Naive thymus-derived CD4-positive, alpha-beta T cell (primary cell): ENCODE measurements at regions of chr14 and their contacts with region 1.

Region 1: DNA sequence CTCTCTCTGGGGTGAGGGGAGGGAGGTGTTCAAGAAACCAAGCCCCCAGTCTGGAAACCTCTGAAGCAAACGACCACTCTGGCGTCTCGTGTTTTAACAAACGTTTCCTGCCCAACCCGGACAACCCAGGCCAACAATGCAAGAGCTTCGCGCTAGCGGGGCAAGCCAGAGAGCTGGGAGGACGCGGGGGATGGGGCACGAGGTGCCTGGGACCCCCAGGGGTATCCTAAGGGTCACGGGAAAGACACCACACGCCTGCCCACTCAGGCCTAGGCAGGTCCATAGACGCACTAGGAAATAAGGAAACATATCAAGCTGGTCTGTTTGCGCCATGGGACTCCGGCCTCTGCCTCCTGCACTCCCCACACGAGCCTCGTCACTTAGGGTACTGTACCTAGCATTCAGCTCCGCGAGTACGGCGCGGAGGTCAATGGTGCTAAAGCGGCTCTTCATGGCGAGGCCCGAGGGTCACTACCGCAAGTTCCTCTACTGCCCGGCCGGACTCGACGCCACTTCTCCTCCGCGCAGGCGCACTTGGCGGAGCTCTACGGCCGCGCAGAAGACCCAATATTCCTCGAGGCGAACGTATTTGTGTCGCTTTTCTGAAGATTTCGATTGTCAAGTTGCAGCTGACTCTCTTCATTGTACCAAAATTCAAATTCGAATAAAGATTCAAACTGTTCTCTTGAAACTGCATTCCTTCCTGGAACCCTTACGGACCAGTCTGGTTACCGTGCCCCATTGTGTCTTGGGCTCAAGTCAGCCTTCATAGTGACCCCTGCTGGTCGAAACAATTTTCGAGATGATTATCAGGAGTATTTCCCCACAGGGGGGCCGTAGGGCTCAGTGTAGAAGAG is at the start of gene NEMF:
- DNase-seq: peak; percentile 67 to 81 (median 78)
- ATAC-seq: peak; percentile 90
- H3K4me3 ChIP-seq: peak within 1 kb of the TSS; percentile 86
- H3K4me3 Mint-ChIP-seq: peak within 1 kb of the TSS; percentile 93 to 100 (median 96)
- H3K27ac ChIP-seq: peak within 1 kb of the TSS; percentile 87
- H3K27ac Mint-ChIP-seq: peak within 1 kb of the TSS; percentile 94 to 99 (median 97)
- H3K4me1 ChIP-seq: peaks cover 17 to 31% of the 10 kb centered on the region in 2 donors
- H3K4me1 Mint-ChIP-seq: peaks cover 26 to 49% (median 43%) of the 10 kb centered on the region in 7 donors
- H3K27me3 ChIP-seq: no peaks in the 10 kb centered on the region
- H3K27me3 Mint-ChIP-seq: no peaks in the 10 kb centered on the region
- total RNA-seq, gene NEMF: 88.6 to 127 (median 105) TPM

Region 2: GRCh38 chr14:49620182-49621113 is 232.1 kb before region 1 on chr14 and contains the starts of genes MGAT2 and RPL36AL:
- CTCF ChIA-PET with region 1: interaction called, 3 read pairs
- POLR2A ChIA-PET with region 1: interaction called, 17 read pairs
- intact Hi-C with region 1: no loop called
- DNase-seq: peak; percentile 89 to 95 (median 94)
- ATAC-seq: peak; percentile 92
- H3K4me3 ChIP-seq: peak within 1 kb of the TSS; percentile 98
- H3K4me3 Mint-ChIP-seq: peak within 1 kb of the TSS; percentile 94 to 99 (median 98)
- H3K27ac ChIP-seq: peak within 1 kb of the TSS; percentile 97
- H3K27ac Mint-ChIP-seq: peak within 1 kb of the TSS; percentile 95 to 100 (median 99)
- H3K4me1 ChIP-seq: peaks cover 40 to 42% of the 10 kb centered on the region in 2 donors
- H3K4me1 Mint-ChIP-seq: peaks cover 36 to 75% (median 56%) of the 10 kb centered on the region in 7 donors
- H3K27me3 ChIP-seq: no peaks in the 10 kb centered on the region
- H3K27me3 Mint-ChIP-seq: no peaks in the 10 kb centered on the region
- total RNA-seq, gene MGAT2: 16.8 to 69.3 (median 35.1) TPM
- total RNA-seq, gene RPL36AL: 177 to 429 (median 281) TPM

Region 3: GRCh38 chr14:49767562-49768300 is 84.8 kb before region 1 on chr14 and contains the start of gene KLHDC2:
- CTCF ChIA-PET with region 1: interaction called, 6 read pairs
- POLR2A ChIA-PET with region 1: interaction called, 21 read pairs
- intact Hi-C with region 1: loop called in 1 of 2 experiments (anchors 1 kb)
- DNase-seq: peak; percentile 84 to 94 (median 89)
- ATAC-seq: peak; percentile 88
- H3K4me3 ChIP-seq: peak within 1 kb of the TSS; percentile 62
- H3K4me3 Mint-ChIP-seq: peak within 1 kb of the TSS; percentile 95 to 99 (median 98)
- H3K27ac ChIP-seq: peak within 1 kb of the TSS; percentile 96
- H3K27ac Mint-ChIP-seq: peak within 1 kb of the TSS; percentile 98 to 100 (median 99)
- H3K4me1 ChIP-seq: peaks cover 26 to 27% of the 10 kb centered on the region in 2 donors
- H3K4me1 Mint-ChIP-seq: peaks cover 20 to 46% (median 40%) of the 10 kb centered on the region in 7 donors
- H3K27me3 ChIP-seq: no peaks in the 10 kb centered on the region
- H3K27me3 Mint-ChIP-seq: peaks cover 0 to 2% (median 0%) of the 10 kb centered on the region in 5 donors
- total RNA-seq, gene KLHDC2: 33.2 to 105 (median 84.7) TPM

Region 4: DNA sequence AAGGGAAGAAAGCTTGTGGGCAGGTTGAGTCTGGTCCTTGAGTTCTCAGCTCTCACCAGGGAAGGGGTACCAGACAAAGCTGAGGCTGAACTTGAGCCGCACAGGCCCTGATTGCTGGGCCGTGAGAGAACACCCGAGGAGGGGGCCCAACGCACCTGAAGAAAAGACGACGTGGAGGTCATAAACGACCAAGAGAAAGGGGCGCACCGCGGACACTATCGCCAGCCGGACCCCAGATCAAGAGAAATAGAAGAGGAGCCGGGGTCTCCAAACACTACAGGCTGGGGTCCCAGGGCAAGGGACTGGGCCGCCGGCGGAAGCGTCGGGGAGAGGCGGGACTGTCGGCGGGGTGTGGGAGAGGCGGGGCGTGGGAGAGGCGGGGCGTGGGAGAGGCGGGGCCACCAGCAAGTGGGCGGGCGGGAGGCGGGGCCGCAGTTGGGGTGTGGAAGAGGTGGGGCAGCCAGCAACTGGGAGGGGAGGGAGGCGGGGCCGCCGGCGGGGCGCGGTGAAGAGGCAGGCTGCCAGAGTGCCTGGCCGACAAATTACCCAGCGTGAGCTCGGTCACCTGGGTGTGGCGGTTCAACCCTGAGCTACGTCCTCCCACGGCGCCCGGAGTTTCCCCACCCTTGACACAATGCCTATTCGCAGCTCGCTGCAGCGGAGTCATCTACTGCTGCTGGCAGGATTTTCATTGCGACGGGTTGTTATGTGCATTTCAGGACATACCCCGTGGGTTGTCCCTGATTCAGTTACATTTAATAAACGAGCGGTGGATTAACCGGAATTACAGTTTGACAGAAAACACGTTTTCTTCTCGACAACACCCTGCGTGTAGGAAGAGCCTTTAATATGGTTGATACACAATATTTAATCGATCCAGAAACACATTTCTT is 15.5 kb after region 1 on chr14:
- CTCF ChIA-PET with region 1: interaction called, 86 read pairs
- POLR2A ChIA-PET with region 1: interaction called, 133 read pairs
- intact Hi-C with region 1: no loop called
- DNase-seq: peak; percentile 87 to 97 (median 93)
- ATAC-seq: peak; percentile 96
- H3K4me3 ChIP-seq: peak overlapping the region; percentile 75
- H3K4me3 Mint-ChIP-seq: peak overlapping the region; percentile 79 to 95 (median 90)
- H3K27ac ChIP-seq: peak overlapping the region; percentile 91
- H3K27ac Mint-ChIP-seq: peak overlapping the region; percentile 93 to 99 (median 97)
- H3K4me1 ChIP-seq: peaks cover 31 to 35% of the 10 kb centered on the region in 2 donors
- H3K4me1 Mint-ChIP-seq: peaks cover 9 to 31% (median 17%) of the 10 kb centered on the region in 7 donors
- H3K27me3 ChIP-seq: no peaks in the 10 kb centered on the region
- H3K27me3 Mint-ChIP-seq: no peaks in the 10 kb centered on the region

Region 5: GRCh38 chr14:50085570-50086320 is 233.2 kb after region 1 on chr14:
- CTCF ChIA-PET with region 1: interaction called, 18 read pairs
- POLR2A ChIA-PET with region 1: interaction called, 10 read pairs
- intact Hi-C with region 1: no loop called
- DNase-seq: peak in 1 of 9 donors; percentile 45
- ATAC-seq: no peak
- H3K4me3 ChIP-seq: no peak overlapping the region
- H3K4me3 Mint-ChIP-seq: peak overlapping the region; percentile 56 to 80 (median 70)
- H3K27ac ChIP-seq: peak overlapping the region; percentile 97
- H3K27ac Mint-ChIP-seq: peak overlapping the region; percentile 86 to 97 (median 90)
- H3K4me1 ChIP-seq: peaks cover 86 to 94% of the 10 kb centered on the region in 2 donors
- H3K4me1 Mint-ChIP-seq: peaks cover 65 to 97% (median 91%) of the 10 kb centered on the region in 7 donors
- H3K27me3 ChIP-seq: no peaks in the 10 kb centered on the region
- H3K27me3 Mint-ChIP-seq: no peaks in the 10 kb centered on the region

Region 6: DNA sequence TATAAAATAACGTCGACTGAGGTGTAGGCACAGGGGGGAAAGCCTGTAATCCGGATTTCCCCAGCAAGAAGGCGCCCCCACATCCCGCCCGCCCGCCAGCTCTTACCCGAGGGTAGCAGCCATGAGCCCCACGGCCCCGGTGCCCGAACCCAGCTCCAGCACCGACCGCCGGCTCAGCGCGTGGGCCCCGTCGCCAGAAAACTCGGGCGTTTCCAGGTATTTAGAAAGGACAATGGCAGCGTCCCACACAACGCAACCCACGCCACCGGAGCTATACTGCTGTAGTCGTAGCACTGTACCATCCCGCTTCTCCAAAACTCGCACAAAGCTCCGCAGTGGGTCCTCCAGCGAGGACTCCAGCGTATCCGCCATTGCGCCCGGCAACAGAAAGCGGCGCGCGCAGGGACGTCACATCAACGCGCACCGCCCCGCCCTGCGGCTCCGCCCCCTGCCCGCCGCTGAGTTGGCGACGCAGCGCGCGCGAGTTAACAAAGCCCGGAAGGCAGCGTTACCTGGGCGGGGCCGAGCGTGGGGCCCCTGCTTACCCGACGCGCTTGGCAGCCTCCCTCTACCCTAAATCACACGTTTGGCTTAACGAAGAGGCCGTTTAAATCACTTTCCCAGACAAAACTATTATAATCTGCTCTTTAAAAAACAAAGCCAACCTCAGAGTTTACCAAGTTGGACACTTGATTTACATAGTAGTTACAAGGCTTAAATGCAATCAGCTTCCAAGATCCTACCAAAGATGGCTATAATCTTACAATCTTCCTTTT is 263.8 kb after region 1 on chr14 and contains the start of gene VCPKMT:
- CTCF ChIA-PET with region 1: interaction called, 15 read pairs
- POLR2A ChIA-PET with region 1: interaction called, 23 read pairs
- intact Hi-C with region 1: loop called in 1 of 2 experiments (anchors 1 kb)
- DNase-seq: peak; percentile 93 to 97 (median 97)
- ATAC-seq: peak; percentile 99
- H3K4me3 ChIP-seq: peak within 1 kb of the TSS; percentile 74
- H3K4me3 Mint-ChIP-seq: peak within 1 kb of the TSS; percentile 92 to 98 (median 96)
- H3K27ac ChIP-seq: peak within 1 kb of the TSS; percentile 94
- H3K27ac Mint-ChIP-seq: peak within 1 kb of the TSS; percentile 97 to 99 (median 98)
- H3K4me1 ChIP-seq: peaks cover 18 to 20% of the 10 kb centered on the region in 2 donors
- H3K4me1 Mint-ChIP-seq: peaks cover 11 to 37% (median 23%) of the 10 kb centered on the region in 7 donors
- H3K27me3 ChIP-seq: no peaks in the 10 kb centered on the region
- H3K27me3 Mint-ChIP-seq: no peaks in the 10 kb centered on the region
- total RNA-seq, gene VCPKMT: 10.3 to 25.9 (median 17.4) TPM

Region 7: GRCh38 chr14:50311975-50312733 is 459.6 kb after region 1 on chr14 and contains the starts of genes DMAC2L and L2HGDH:
- CTCF ChIA-PET with region 1: no interaction called
- POLR2A ChIA-PET with region 1: interaction called, 7 read pairs
- intact Hi-C with region 1: loop called in 1 of 2 experiments (anchors 2 kb)
- DNase-seq: peak; percentile 80 to 95 (median 88)
- ATAC-seq: peak; percentile 94
- H3K4me3 ChIP-seq: peak within 1 kb of the TSS; percentile 88
- H3K4me3 Mint-ChIP-seq: peak within 1 kb of the TSS; percentile 86 to 99 (median 96)
- H3K27ac ChIP-seq: peak within 1 kb of the TSS; percentile 84
- H3K27ac Mint-ChIP-seq: peak within 1 kb of the TSS; percentile 95 to 99 (median 98)
- H3K4me1 ChIP-seq: peaks cover 11 to 12% of the 10 kb centered on the region in 2 donors
- H3K4me1 Mint-ChIP-seq: peaks cover 16 to 56% (median 46%) of the 10 kb centered on the region in 7 donors
- H3K27me3 ChIP-seq: no peaks in the 10 kb centered on the region
- H3K27me3 Mint-ChIP-seq: no peaks in the 10 kb centered on the region
- total RNA-seq, gene DMAC2L: 15.5 to 21.2 (median 16.7) TPM
- total RNA-seq, gene L2HGDH: 3.7 to 10.1 (median 4.8) TPM